CD4-positive, alpha-beta T cell (primary cell): ENCODE measurements at regions of chr13 and their contacts with region 1.

Region 1: GRCh38 chr13:58476206-58476918 is 844.8 kb downstream of the PCDH17 start:
- DNase-seq: no peak
- ATAC-seq: no peak
- H3K4me3 ChIP-seq: no peak overlapping the region
- H3K4me3 Mint-ChIP-seq: no peak overlapping the region
- H3K27ac ChIP-seq: no peak overlapping the region
- H3K27ac Mint-ChIP-seq: no peak overlapping the region
- H3K4me1 ChIP-seq: no peaks in the 10 kb centered on the region
- H3K4me1 Mint-ChIP-seq: no peaks in the 10 kb centered on the region
- H3K27me3 ChIP-seq: no peaks in the 10 kb centered on the region
- H3K27me3 Mint-ChIP-seq: no peaks in the 10 kb centered on the region
- CTCF ChIP-seq: no peak

Region 2: DNA sequence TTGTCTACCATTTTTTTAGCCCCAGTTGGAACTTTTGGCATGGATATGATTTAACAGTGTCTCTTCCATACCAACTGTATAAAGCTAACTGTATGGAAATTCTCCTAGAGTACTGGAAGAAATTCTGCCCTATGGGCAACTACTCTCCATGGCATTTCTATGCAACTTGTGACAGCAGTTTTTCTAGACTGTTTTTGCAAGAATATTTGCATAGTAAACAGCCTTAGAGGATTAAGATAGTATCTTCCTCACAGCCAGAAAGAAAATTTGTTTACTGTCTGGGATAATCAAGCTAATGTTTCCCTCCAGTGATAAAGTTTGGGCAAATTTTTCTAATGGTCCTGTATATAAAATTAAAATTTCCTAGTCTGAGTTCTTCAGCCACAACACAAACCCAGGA is 964.7 kb before region 1 on chr13:
- CTCF ChIA-PET with region 1: no interaction called
- POLR2A ChIA-PET with region 1: no interaction called
- intact Hi-C with region 1: loop called in 1 of 2 experiments (anchors 5 kb)
- DNase-seq: no peak
- ATAC-seq: no peak
- H3K4me3 ChIP-seq: no peak overlapping the region
- H3K4me3 Mint-ChIP-seq: no peak overlapping the region
- H3K27ac ChIP-seq: no peak overlapping the region
- H3K27ac Mint-ChIP-seq: no peak overlapping the region
- H3K4me1 ChIP-seq: no peaks in the 10 kb centered on the region
- H3K4me1 Mint-ChIP-seq: no peaks in the 10 kb centered on the region
- H3K27me3 ChIP-seq: no peaks in the 10 kb centered on the region
- H3K27me3 Mint-ChIP-seq: no peaks in the 10 kb centered on the region
- CTCF ChIP-seq: no peak

Region 3: GRCh38 chr13:58306062-58306461 is 170.3 kb before region 1 on chr13:
- CTCF ChIA-PET with region 1: no interaction called
- POLR2A ChIA-PET with region 1: no interaction called
- intact Hi-C with region 1: no loop called
- DNase-seq: no peak
- ATAC-seq: no peak
- H3K4me3 ChIP-seq: no peak overlapping the region
- H3K4me3 Mint-ChIP-seq: no peak overlapping the region
- H3K27ac ChIP-seq: no peak overlapping the region
- H3K27ac Mint-ChIP-seq: no peak overlapping the region
- H3K4me1 ChIP-seq: no peaks in the 10 kb centered on the region
- H3K4me1 Mint-ChIP-seq: no peaks in the 10 kb centered on the region
- H3K27me3 ChIP-seq: no peaks in the 10 kb centered on the region
- H3K27me3 Mint-ChIP-seq: no peaks in the 10 kb centered on the region
- CTCF ChIP-seq: no peak